Dendritic cell treated with granulocyte-macrophage colony-stimulating factor and Interleukin-4, amounts not matched to agents 40 ng/mL and 50 ng/mL, for 4 days (primary cell): ENCODE measurements at regions of chr17 and their contacts with region 1.

Region 1: GRCh38 chr17:46940621-46941404 is 17.9 kb downstream of the GOSR2 start:
- H3K4me3 Mint-ChIP-seq: no peak overlapping the region
- H3K27ac Mint-ChIP-seq: no peak overlapping the region
- H3K4me1 Mint-ChIP-seq: peaks cover 21% of the 10 kb centered on the region
- H3K27me3 Mint-ChIP-seq: peaks cover 14% of the 10 kb centered on the region

Region 2: GRCh38 chr17:46841561-46842379 is 99.0 kb before region 1 on chr17:
- intact Hi-C with region 1: loop called (anchors 1 kb)
- H3K4me3 Mint-ChIP-seq: no peak overlapping the region
- H3K27ac Mint-ChIP-seq: no peak overlapping the region
- H3K4me1 Mint-ChIP-seq: peaks cover 6% of the 10 kb centered on the region
- H3K27me3 Mint-ChIP-seq: peaks cover 48% of the 10 kb centered on the region

Region 3: DNA sequence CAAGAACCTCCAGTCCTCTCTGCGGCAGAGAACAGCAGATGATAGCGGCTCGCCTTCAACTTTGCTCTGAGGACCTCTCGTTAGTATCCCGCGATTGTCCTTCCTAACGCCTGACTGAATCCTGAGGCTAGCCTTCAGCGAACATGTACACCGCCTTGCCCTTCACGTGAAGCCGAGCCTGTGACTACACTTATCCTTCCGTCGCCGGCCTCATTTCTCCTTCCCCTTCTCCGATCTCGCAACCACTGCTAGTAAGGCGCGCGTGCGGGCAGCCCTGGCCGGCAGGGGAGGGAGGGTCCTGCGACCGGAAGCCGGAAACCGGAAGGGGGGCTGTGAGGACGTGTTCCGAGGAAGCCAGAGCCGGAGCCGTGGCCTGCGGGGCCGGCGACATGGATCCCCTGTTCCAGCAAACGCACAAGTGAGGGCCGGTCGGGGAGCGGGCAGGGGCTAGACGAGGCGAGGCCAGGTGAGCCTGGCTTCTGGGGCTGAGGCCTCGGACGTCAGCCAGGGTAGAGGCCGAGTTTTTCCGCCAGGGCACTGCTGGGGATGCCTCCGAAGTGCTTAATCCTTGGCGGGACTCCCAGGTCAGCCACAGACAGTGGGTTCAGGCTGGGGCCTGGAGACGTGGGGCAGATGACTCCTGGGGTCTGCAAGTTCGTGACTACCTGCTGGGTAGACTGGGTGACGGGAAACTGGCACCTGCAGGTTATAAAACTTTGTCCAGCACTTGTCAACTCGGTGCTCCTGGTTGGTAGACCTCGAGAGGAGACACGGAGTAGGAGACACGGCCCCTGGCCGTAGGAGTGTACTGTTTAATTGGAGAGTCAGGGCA is 17.8 kb before region 1 on chr17 and contains the start of gene GOSR2:
- intact Hi-C with region 1: no loop called
- H3K4me3 Mint-ChIP-seq: peak within 1 kb of the TSS; percentile 85
- H3K27ac Mint-ChIP-seq: peak within 1 kb of the TSS; percentile 98
- H3K4me1 Mint-ChIP-seq: peaks cover 34% of the 10 kb centered on the region
- H3K27me3 Mint-ChIP-seq: peaks cover 2% of the 10 kb centered on the region

Region 4: GRCh38 chr17:46995841-46996571 is 55.2 kb after region 1 on chr17:
- intact Hi-C with region 1: loop called (anchors 2 kb)
- H3K4me3 Mint-ChIP-seq: no peak overlapping the region
- H3K27ac Mint-ChIP-seq: no peak overlapping the region
- H3K4me1 Mint-ChIP-seq: no peaks in the 10 kb centered on the region
- H3K27me3 Mint-ChIP-seq: no peaks in the 10 kb centered on the region